AG04449 (cell line): ENCODE measurements at regions of chr2 and their contacts with region 1.

Region 1: DNA sequence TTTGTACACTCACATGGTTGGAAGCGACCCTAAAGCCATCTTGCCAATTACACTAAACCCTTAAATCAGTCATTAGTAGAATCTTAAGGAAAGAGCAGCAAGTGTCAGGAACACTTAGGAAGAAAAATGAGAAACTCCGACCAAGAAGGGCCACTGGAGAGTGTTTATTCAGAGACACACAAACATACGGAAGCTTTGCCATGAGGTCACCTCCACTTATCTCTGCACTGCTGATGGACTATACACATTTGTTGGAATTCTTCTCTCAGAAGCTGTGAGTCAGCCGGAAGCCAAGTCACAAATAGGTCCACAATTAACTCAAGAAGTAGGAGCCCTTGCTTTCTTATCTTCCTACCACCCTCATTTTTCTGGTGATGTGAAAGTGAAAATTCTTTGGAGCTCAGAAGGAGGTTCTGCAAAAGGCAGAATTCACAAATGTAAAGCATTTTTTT is 21.6 kb downstream of the BMP10 start:
- DNase-seq: no peak
- H3K4me3 ChIP-seq: no peak overlapping the region
- CTCF ChIP-seq: no peak

Region 2: DNA sequence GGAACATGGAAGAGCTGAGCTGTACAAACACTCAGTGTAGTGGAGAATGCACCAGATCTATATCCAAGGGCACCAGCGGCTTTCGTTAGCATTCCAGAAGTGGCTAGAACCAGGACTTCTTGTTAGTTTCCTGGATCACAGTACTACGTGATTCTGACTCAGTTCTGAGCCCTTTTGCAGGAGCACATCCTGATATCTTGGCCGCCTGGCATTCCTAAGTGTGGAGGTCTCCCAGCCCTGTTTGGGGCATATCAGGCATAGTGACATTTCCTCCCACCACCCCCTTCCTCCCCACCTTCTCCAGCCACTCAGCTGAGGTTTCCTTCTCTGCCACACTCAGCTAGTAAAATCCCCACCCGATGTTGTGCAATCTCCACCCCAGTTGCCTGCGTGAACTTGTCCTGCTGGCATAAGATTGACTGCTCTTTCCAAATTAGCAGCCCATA is 41.8 kb before region 1 on chr2:
- CTCF ChIA-PET with region 1: no interaction called
- POLR2A ChIA-PET with region 1: no interaction called
- DNase-seq: no peak
- H3K4me3 ChIP-seq: no peak overlapping the region
- CTCF ChIP-seq: no peak

Region 3: GRCh38 chr2:68837164-68837860 is 12.3 kb before region 1 on chr2:
- CTCF ChIA-PET with region 1: interaction called, 84 read pairs
- POLR2A ChIA-PET with region 1: no interaction called
- DNase-seq: no peak
- H3K4me3 ChIP-seq: no peak overlapping the region
- CTCF ChIP-seq: peak; percentile 72